Dendritic cell treated with granulocyte-macrophage colony-stimulating factor and Interleukin-4, amounts not matched to agents 40 ng/mL and 50 ng/mL, for 4 days (primary cell): ENCODE measurements at regions of chr21 and their contacts with region 1.

Region 1: DNA sequence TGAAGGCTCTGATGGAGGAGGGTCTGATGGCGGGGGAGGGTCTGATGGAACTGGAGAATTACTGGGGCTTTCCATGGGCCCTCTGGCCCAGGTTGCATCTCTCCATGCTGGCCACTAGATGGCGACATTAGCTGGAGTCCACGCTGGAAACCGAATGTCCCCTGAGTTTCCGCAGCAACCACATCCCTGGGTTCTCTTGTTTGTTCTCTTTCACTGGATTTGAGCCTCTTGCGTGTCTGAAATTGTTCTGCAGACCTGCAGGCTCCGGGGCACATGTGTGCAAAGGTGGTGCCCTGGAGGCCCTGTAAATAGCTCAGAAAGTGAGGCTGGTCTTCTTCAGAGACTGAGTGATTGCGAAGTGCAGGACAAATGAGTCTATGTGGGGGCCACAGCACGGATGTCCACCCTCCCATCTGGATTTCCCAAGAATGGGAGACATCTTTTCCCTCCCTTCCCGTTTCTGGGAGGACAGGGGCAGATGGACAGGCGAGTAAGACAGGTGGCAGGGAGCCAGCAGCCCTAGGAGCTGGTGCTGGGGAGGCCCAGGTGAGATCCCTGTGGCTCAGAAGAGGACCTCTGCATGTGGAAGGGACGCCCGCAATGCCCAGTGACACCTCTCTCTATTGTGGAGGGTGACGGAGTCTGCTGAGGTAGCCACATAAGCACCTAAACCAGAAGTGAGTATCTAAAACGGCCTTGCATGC is 73.2 kb upstream of the ABCG1 start:
- H3K4me3 Mint-ChIP-seq: no peak overlapping the region
- H3K27ac Mint-ChIP-seq: peak overlapping the region; percentile 4
- H3K4me1 Mint-ChIP-seq: peaks cover 33% of the 10 kb centered on the region
- H3K27me3 Mint-ChIP-seq: peaks cover 8% of the 10 kb centered on the region

Region 2: DNA sequence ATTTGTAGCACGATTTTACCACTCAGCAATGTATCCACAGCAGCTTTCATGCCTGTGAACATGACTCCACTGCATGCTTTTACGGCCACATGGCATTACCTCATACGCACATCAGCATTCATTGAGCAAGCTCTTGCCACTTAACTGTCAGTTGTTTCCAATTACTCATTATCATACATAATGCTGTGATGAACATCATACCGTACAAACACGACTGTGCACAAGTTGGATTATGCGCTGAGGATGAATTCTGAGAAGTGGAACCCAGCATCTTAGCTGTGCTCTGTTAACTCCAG is 65.0 kb before region 1 on chr21:
- intact Hi-C with region 1: no loop called
- H3K4me3 Mint-ChIP-seq: no peak overlapping the region
- H3K27ac Mint-ChIP-seq: peak overlapping the region; percentile 87
- H3K4me1 Mint-ChIP-seq: peaks cover 51% of the 10 kb centered on the region
- H3K27me3 Mint-ChIP-seq: peaks cover 11% of the 10 kb centered on the region

Region 3: GRCh38 chr21:42258153-42258884 is 112.6 kb after region 1 on chr21:
- intact Hi-C with region 1: loop called (anchors 5 kb)
- H3K4me3 Mint-ChIP-seq: no peak overlapping the region
- H3K27ac Mint-ChIP-seq: no peak overlapping the region
- H3K4me1 Mint-ChIP-seq: peaks cover 66% of the 10 kb centered on the region
- H3K27me3 Mint-ChIP-seq: peaks cover 11% of the 10 kb centered on the region

Region 4: DNA sequence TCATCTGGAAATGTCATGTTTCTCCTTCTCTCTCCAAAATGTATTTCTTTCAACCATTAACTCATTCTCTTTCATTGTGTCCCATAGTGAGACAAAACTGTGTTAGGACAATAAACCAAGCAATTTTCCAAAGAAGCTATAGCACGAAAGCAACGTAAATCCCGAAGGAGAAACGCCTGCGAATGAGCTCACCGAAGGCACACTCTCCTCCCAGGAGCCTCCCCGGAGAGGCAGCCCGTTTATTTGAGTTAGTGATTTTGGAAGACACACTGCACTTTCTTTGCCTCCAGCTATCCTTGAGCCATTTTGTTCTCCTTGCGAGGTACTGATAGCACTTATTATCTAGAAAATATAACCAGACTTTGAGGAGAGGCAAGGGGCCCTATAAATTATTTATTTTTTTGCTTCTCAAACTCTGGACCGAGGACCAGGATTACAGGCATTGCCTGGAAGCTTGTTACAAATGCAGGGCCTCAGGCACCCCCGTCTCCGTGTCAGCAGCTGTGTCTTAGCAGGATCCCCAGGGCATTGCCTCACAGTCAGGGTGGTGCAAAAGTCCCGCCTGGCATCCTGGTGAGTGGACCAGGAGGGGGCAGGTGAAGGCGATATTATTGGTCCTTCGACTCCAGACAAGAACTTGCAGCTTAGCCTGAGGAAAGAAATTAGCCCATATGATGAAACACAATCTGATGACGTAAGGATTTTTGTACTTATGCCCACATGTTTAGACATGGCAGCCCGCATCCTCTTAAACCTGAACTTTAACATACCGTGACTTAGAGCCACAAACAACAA is 309.3 kb after region 1 on chr21:
- intact Hi-C with region 1: loop called (anchors 5 kb)
- H3K4me3 Mint-ChIP-seq: no peak overlapping the region
- H3K27ac Mint-ChIP-seq: no peak overlapping the region
- H3K4me1 Mint-ChIP-seq: peaks cover 23% of the 10 kb centered on the region
- H3K27me3 Mint-ChIP-seq: peaks cover 12% of the 10 kb centered on the region